AG04449 (cell line): ENCODE measurements at regions of chr3 and their contacts with region 1.

Region 1: GRCh38 chr3:42961633-42962032 is 17.5 kb upstream of the GASK1A start:
- DNase-seq: peak; percentile 4
- H3K4me3 ChIP-seq: no peak overlapping the region
- CTCF ChIP-seq: peak; percentile 50

Region 2: DNA sequence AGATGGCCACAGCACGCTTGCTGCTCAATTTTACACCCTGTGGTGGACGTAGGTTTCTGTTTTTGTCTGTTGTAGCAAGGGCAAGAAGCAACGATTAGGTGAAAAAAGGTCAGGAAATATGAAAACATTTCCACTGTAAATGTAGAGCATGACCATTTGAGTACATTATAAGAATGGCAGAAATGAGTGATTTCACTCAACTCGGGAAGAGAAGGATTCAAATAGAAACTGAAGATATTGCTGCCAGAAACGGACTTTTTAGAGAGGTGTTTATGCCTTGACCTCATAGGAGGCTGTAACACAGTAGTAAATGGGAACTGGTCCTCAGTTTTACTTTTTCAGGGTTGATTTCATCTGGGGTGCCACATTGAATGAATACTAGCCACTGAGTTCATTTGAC is 15.6 kb before region 1 on chr3:
- CTCF ChIA-PET with region 1: interaction called, 16 read pairs
- POLR2A ChIA-PET with region 1: no interaction called
- DNase-seq: no peak
- H3K4me3 ChIP-seq: no peak overlapping the region
- CTCF ChIP-seq: no peak

Region 3: GRCh38 chr3:43005253-43005652 is 43.6 kb after region 1 on chr3:
- CTCF ChIA-PET with region 1: no interaction called
- POLR2A ChIA-PET with region 1: no interaction called
- DNase-seq: no peak
- H3K4me3 ChIP-seq: no peak overlapping the region
- CTCF ChIP-seq: no peak

Region 4: GRCh38 chr3:43155464-43156121 is 194.0 kb after region 1 on chr3:
- CTCF ChIA-PET with region 1: interaction called, 241 read pairs
- POLR2A ChIA-PET with region 1: no interaction called
- DNase-seq: peak; percentile 41
- H3K4me3 ChIP-seq: no peak overlapping the region
- CTCF ChIP-seq: peak; percentile 75

Region 5: GRCh38 chr3:43162230-43163084 is 200.8 kb after region 1 on chr3:
- CTCF ChIA-PET with region 1: interaction called, 241 read pairs
- POLR2A ChIA-PET with region 1: no interaction called
- DNase-seq: peak; percentile 55
- H3K4me3 ChIP-seq: no peak overlapping the region
- CTCF ChIP-seq: peak; percentile 29